Activated naive CD4-positive, alpha-beta T cell treated with anti-CD3 and anti-CD28 coated beads, Interleukin-2, amount 10 ng/mL, durations not matched to agents 7 days and 5 days (primary cell): ENCODE measurements at regions of chr15 and their contacts with region 1.

Region 1: DNA sequence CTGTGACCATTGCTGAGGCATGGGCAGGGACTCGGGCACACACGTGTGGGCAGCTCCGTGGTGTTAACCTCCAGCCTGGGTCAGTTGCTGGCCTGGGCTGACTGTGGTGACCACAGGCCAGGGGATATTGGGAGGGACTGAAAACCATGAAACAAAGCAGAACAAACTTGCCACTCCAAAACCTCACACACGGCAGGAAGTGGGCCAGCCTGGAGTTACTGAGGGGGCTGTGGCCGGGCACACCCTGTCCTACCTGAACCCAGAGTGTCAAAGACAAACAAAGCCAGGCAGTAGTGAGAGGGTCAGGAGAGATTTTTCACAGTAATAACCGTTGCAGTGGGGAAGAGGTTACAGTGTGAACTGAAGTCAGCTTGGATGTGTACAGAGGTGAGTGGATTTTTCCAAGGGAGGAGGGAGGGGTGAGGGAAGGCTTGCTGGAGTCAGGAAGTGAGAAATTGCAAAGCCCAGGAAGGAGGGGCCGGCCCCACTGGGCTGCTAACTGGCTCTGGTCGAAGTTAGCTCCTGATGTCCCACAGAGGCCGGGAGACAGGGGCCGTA is 40.0 kb upstream of the ATP10A start:
- DNase-seq: no peak
- H3K4me3 Mint-ChIP-seq: no peak overlapping the region
- H3K27ac Mint-ChIP-seq: peak overlapping the region; percentile 16
- H3K4me1 Mint-ChIP-seq: peaks cover 16% of the 10 kb centered on the region
- H3K27me3 Mint-ChIP-seq: no peaks in the 10 kb centered on the region

Region 2: DNA sequence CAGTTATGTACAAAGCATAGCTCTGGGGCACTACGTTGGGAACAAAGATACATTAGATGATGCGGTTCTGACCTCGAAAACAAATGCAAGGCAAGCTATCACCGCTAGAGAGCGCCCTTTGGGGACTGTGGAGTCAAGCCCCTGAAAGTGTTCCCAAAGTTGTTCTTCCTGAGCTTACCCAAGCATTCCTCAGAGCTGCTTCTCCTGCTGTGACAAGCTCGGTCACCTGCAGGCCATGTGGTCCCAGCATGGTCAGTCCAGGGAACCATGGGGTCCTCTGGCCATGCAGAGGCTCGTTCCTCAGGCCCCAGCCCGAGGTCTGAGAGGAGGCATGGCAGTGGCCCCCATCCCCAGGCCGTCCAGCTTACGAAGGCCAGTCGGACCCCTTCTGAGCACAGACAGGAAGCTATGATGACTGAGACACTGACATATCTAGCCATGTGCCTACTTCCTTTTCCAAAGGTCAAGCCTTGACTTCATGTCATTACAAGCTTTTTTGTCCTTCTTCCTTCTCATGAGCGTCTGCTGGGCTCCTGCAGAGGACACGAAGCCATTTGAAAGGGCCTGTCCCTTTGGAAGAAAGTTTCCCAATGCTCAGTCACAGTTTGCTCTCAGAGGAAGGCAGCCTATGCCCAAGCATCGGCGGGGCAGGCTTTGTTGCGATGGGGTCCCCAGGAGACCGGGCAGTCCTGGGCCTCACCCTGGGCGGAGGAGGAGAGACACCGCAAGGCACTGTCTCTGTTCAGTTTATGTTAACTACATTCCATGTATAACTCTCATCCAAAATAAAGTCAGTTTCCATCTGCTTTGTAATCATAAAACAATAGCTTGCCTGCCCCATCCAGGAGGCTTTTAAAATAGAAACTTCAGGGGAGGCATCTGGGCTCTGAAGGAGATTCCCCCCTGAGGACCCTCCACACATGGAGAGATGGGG is 119.2 kb before region 1 on chr15:
- CTCF ChIA-PET with region 1: interaction called, 10 read pairs
- DNase-seq: peak; percentile 64
- H3K4me3 Mint-ChIP-seq: no peak overlapping the region
- H3K27ac Mint-ChIP-seq: no peak overlapping the region
- H3K4me1 Mint-ChIP-seq: peaks cover 27% of the 10 kb centered on the region
- H3K27me3 Mint-ChIP-seq: no peaks in the 10 kb centered on the region

Region 3: DNA sequence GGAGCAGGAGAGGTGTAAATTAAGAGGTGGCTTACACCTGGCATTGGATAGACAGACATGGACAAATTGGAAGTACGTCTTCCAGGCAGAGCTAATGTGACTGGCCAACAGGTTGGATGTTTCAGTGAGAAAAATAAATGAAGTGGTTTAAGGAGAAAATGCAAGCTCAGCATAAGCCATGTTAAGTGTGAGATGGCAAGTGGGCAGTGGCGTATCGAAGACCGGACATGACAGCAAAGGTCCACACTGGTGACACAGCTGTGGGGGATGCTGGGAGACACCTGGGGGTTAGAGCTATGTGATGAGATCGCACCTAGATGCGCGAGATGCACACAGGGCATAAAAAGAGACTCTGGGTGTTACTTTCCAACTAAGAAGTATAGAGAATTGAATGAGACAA is 36.2 kb before region 1 on chr15:
- CTCF ChIA-PET with region 1: no interaction called
- DNase-seq: no peak
- H3K4me3 Mint-ChIP-seq: no peak overlapping the region
- H3K27ac Mint-ChIP-seq: no peak overlapping the region
- H3K4me1 Mint-ChIP-seq: peaks cover 20% of the 10 kb centered on the region
- H3K27me3 Mint-ChIP-seq: peaks cover 37% of the 10 kb centered on the region